Dorsolateral prefrontal cortex (tissue), 120 donors: ENCODE measurements at regions of chr1 and their contacts with region 1.

Region 1: DNA sequence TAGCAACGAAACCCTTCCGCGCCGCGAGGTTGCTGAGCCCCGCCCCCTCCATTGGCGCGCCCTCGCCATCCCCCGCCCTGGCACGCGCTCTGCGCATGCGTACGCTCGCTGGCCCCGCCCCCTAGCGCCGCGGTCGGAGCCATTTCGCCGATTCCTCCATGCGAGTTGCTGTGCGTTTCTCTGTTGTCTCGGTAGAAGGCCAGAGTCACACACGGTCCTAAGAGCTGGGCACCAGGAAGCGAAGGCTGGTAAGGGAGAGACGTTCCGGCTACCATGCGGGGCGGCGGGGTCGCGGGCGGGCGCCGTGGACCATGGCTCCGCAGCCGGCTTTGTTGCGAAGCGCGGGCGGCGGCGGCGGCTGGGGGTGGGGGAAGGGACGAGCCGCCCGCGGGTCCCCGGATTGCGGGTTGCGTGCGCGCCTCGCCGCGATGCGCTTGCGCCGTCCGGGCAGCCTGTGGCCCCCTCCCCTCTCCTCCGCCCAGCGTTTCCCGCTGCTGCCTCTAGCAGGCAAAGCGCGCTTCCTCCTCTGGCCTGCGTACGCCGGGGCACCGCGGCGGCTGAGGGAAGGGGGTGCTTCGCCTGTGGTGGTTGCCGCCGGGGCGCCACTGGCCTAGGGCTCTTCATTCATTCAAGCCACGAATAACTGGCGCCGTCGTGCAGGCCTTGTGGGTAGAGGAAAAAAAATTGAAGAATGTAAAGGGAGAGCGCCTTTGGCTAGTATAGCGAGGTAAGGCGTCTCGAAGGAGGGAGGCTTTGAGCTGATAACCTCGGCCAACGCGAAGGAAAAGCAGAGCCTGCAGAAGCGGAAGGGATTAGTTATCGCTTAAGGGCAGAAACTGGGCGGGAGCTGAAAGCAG is at the start of gene DHX9:
- DNase-seq: peak; percentile 76 to 97 (median 92)
- H3K4me3 ChIP-seq: peak within 1 kb of the TSS; percentile 55 to 98 (median 87)
- H3K27ac ChIP-seq: peak within 1 kb of the TSS; percentile 75 to 98 (median 93)
- H3K27me3 ChIP-seq: no peaks in the 10 kb centered on the region
- CTCF ChIP-seq: peak in 44 of 56 donors; percentile 8 to 60 (median 40)
- total RNA-seq, gene DHX9: 81.5 to 144 (median 114) TPM

Region 2: GRCh38 chr1:182789138-182790076 is 50.0 kb before region 1 on chr1 and contains the start of gene NPL:
- intact Hi-C with region 1: loop called (anchors 1 to 5 kb)
- DNase-seq: peak; percentile 66 to 93 (median 81)
- H3K4me3 ChIP-seq: peak within 1 kb of the TSS; percentile 50 to 94 (median 76)
- H3K27ac ChIP-seq: peak within 1 kb of the TSS in 58 of 59 donors; percentile 6 to 90 (median 76)
- H3K27me3 ChIP-seq: no peaks in the 10 kb centered on the region
- CTCF ChIP-seq: peak in 37 of 56 donors; percentile 9 to 62 (median 26)
- total RNA-seq, gene NPL: 12.3 to 58.6 (median 25.0) TPM

Region 3: GRCh38 chr1:182869241-182869666 is 29.8 kb after region 1 on chr1:
- intact Hi-C with region 1: no loop called
- DNase-seq: no peak
- H3K4me3 ChIP-seq: no peak overlapping the region
- H3K27ac ChIP-seq: no peak overlapping the region
- H3K27me3 ChIP-seq: no peaks in the 10 kb centered on the region
- CTCF ChIP-seq: no peak